Activated CD4-positive, alpha-beta memory T cell treated with anti-CD3 and anti-CD28 coated beads for 36 hours (primary cell): ENCODE measurements at regions of chr1 and their contacts with region 1.

Region 1: GRCh38 chr1:37989361-37989930 is 376 bp downstream of the SF3A3 start:
- DNase-seq: peak; percentile 54
- H3K4me3 Mint-ChIP-seq: peak overlapping the region; percentile 98
- H3K27ac Mint-ChIP-seq: peak overlapping the region; percentile 94
- H3K4me1 Mint-ChIP-seq: peaks cover 20% of the 10 kb centered on the region
- H3K27me3 Mint-ChIP-seq: no peaks in the 10 kb centered on the region

Region 2: GRCh38 chr1:37807555-37808368 is 181.7 kb before region 1 on chr1 and contains the starts of genes C1orf122 and YRDC:
- CTCF ChIA-PET with region 1: interaction called, 10 read pairs
- POLR2A ChIA-PET with region 1: interaction called, 3 read pairs
- intact Hi-C with region 1: loop called (anchors 5 kb)
- DNase-seq: peak; percentile 95
- H3K4me3 Mint-ChIP-seq: peak within 1 kb of the TSS; percentile 95
- H3K27ac Mint-ChIP-seq: peak within 1 kb of the TSS; percentile 96
- H3K4me1 Mint-ChIP-seq: peaks cover 40% of the 10 kb centered on the region
- H3K27me3 Mint-ChIP-seq: no peaks in the 10 kb centered on the region
- total RNA-seq, gene C1orf122: 18.1 to 19.7 TPM
- total RNA-seq, gene YRDC: 34.1 to 36.1 TPM

Region 3: DNA sequence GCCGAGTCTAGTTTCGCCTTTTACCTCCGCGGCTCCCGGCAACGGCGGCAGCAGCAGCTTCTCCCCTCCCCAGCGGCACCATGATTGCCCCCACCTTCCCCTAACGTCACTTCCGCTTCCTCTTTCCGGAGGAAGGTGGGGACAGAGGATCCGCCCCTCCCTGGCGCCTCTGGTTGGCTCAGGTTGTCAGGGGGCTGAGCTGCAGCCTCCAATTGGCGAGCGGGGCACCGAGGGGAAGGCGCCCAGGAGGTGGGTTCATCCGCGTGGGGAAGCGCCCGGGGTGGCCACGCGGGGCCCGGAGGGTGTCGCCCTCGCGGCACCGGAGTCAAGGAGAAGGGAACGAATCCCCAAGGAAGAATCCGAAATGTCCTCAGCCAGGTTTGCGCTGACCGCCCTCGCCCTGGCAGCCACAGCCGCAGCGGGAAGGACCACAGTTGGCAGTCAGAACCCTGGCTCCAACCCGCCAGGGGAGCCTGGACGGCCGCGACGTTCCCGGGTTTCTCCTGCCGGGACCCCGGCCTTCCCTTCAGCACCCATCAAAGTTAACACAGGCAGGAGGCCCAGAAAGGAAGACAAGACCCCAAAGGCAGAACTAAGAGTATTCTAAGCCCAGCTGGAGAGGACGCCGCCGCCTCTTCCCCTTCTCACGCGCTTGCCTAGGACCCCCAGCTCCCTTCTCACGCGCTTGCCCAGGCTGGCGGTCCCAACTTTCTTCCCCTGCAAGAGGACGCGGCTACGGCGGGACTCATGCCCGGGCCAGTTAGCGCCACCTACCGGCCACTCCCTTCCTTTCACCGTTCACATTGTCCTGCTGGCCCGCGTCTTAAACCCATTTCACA is 129.7 kb before region 1 on chr1 and contains the start of gene MTF1:
- CTCF ChIA-PET with region 1: interaction called, 7 read pairs
- POLR2A ChIA-PET with region 1: interaction called, 6 read pairs
- intact Hi-C with region 1: loop called (anchors 1 kb)
- DNase-seq: peak; percentile 98
- H3K4me3 Mint-ChIP-seq: peak within 1 kb of the TSS; percentile 96
- H3K27ac Mint-ChIP-seq: peak within 1 kb of the TSS; percentile 93
- H3K4me1 Mint-ChIP-seq: peaks cover 36% of the 10 kb centered on the region
- H3K27me3 Mint-ChIP-seq: no peaks in the 10 kb centered on the region
- total RNA-seq, gene MTF1: 21.1 to 22.8 TPM

Region 4: GRCh38 chr1:38004284-38005108 is 15.1 kb after region 1 on chr1:
- CTCF ChIA-PET with region 1: interaction called, 23 read pairs
- POLR2A ChIA-PET with region 1: interaction called, 4 read pairs
- intact Hi-C with region 1: no loop called
- DNase-seq: no peak
- H3K4me3 Mint-ChIP-seq: peak overlapping the region; percentile 80
- H3K27ac Mint-ChIP-seq: peak overlapping the region; percentile 61
- H3K4me1 Mint-ChIP-seq: peaks cover 41% of the 10 kb centered on the region
- H3K27me3 Mint-ChIP-seq: peaks cover 1% of the 10 kb centered on the region

Region 5: GRCh38 chr1:38012363-38013226 is 23.1 kb after region 1 on chr1 and contains the start of gene UTP11:
- CTCF ChIA-PET with region 1: interaction called, 28 read pairs
- POLR2A ChIA-PET with region 1: interaction called, 10 read pairs
- intact Hi-C with region 1: loop called (anchors 1 kb)
- DNase-seq: peak; percentile 95
- H3K4me3 Mint-ChIP-seq: peak within 1 kb of the TSS; percentile 98
- H3K27ac Mint-ChIP-seq: peak within 1 kb of the TSS; percentile 95
- H3K4me1 Mint-ChIP-seq: peaks cover 58% of the 10 kb centered on the region
- H3K27me3 Mint-ChIP-seq: no peaks in the 10 kb centered on the region
- total RNA-seq, gene UTP11: 51.2 to 52.3 TPM

Region 6: GRCh38 chr1:38018864-38019343 is 29.5 kb after region 1 on chr1:
- CTCF ChIA-PET with region 1: interaction called, 28 read pairs
- POLR2A ChIA-PET with region 1: interaction called, 3 read pairs
- intact Hi-C with region 1: loop called (anchors 1 kb)
- DNase-seq: no peak
- H3K4me3 Mint-ChIP-seq: no peak overlapping the region
- H3K27ac Mint-ChIP-seq: no peak overlapping the region
- H3K4me1 Mint-ChIP-seq: peaks cover 27% of the 10 kb centered on the region
- H3K27me3 Mint-ChIP-seq: no peaks in the 10 kb centered on the region

Region 7: GRCh38 chr1:38071312-38072256 is 82.1 kb after region 1 on chr1:
- CTCF ChIA-PET with region 1: interaction called, 12 read pairs
- POLR2A ChIA-PET with region 1: no interaction called
- intact Hi-C with region 1: no loop called
- DNase-seq: no peak
- H3K4me3 Mint-ChIP-seq: no peak overlapping the region
- H3K27ac Mint-ChIP-seq: no peak overlapping the region
- H3K4me1 Mint-ChIP-seq: no peaks in the 10 kb centered on the region
- H3K27me3 Mint-ChIP-seq: peaks cover 26% of the 10 kb centered on the region